CD8-positive, alpha-beta T cell (primary cell): ENCODE measurements at regions of chr12 and their contacts with region 1.

Region 1: GRCh38 chr12:49842519-49843352 is at the start of gene BCDIN3D:
- DNase-seq: peak; percentile 77 to 96 (median 92)
- ATAC-seq: peak; percentile 91
- H3K4me3 ChIP-seq: peak within 1 kb of the TSS; percentile 87 to 91
- H3K4me3 Mint-ChIP-seq: peak within 1 kb of the TSS; percentile 94
- H3K27ac ChIP-seq: peak within 1 kb of the TSS; percentile 71 to 77
- H3K27ac Mint-ChIP-seq: peak within 1 kb of the TSS; percentile 98
- H3K4me1 ChIP-seq: peaks cover 25% of the 10 kb centered on the region
- H3K4me1 Mint-ChIP-seq: peaks cover 33% of the 10 kb centered on the region
- H3K27me3 ChIP-seq: no peaks in the 10 kb centered on the region
- H3K27me3 Mint-ChIP-seq: no peaks in the 10 kb centered on the region
- CTCF ChIP-seq: no peak
- total RNA-seq, gene BCDIN3D: 4.2 to 5.9 TPM

Region 2: DNA sequence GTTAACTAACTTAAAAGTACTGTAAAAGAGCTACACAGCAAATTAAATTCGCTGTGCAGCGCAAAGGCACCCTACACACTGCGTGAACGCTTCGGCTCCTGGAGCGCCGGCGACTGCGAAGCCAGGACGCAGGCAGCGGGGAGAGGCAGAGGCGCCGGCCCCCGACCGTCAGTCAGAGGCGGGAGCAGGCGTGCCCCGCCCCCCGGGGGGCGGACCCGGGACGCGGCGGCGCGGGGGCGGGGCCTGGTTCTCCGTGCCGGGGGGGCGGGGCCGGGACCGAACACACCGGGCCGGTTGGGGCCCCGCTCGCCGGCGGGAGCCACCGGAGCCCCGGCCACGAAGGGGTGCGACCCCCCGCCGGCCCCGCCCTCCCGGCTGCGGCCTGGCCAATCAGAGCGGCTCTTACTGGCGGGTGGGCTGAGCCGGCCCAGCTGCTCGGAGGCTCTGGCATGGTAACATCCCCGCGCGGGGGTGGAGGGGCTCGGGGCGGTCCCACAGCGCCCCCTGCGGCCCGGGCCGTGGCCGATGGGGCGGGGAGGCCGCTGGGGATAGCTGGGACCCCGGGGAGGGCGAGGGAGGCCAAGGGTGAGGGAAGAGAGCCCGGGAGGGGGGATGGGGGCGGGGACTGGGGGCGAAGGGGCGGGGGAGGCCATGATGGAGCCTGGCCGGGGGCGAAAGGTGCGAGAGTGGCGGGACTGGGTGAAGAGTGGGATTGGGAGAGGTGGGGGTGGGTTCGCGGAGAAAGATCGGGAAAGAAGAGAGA is 219.4 kb before region 1 on chr12 and contains the start of gene PRPF40B:
- CTCF ChIA-PET with region 1: interaction called, 5 read pairs
- POLR2A ChIA-PET with region 1: no interaction called
- intact Hi-C with region 1: loop called (anchors 5 kb)
- DNase-seq: peak; percentile 68 to 92 (median 84)
- ATAC-seq: peak; percentile 78
- H3K4me3 ChIP-seq: peak within 1 kb of the TSS; percentile 56 to 82
- H3K4me3 Mint-ChIP-seq: peak within 1 kb of the TSS; percentile 88
- H3K27ac ChIP-seq: peak within 1 kb of the TSS; percentile 56 to 63
- H3K27ac Mint-ChIP-seq: peak within 1 kb of the TSS; percentile 91
- H3K4me1 ChIP-seq: peaks cover 34% of the 10 kb centered on the region
- H3K4me1 Mint-ChIP-seq: peaks cover 27% of the 10 kb centered on the region
- H3K27me3 ChIP-seq: no peaks in the 10 kb centered on the region
- H3K27me3 Mint-ChIP-seq: no peaks in the 10 kb centered on the region
- CTCF ChIP-seq: peak; percentile 46
- total RNA-seq, gene PRPF40B: 3.4 to 4.2 TPM

Region 3: GRCh38 chr12:49740930-49741881 is 101.5 kb before region 1 on chr12 and contains the start of gene TMBIM6:
- CTCF ChIA-PET with region 1: interaction called, 16 read pairs
- POLR2A ChIA-PET with region 1: interaction called, 15 read pairs
- intact Hi-C with region 1: loop called (anchors 1 kb)
- DNase-seq: peak; percentile 96 to 100 (median 98)
- ATAC-seq: peak; percentile 86
- H3K4me3 ChIP-seq: peak within 1 kb of the TSS; percentile 63 to 88
- H3K4me3 Mint-ChIP-seq: peak within 1 kb of the TSS; percentile 93
- H3K27ac ChIP-seq: peak within 1 kb of the TSS; percentile 96 to 99
- H3K27ac Mint-ChIP-seq: peak within 1 kb of the TSS; percentile 98
- H3K4me1 ChIP-seq: peaks cover 38% of the 10 kb centered on the region
- H3K4me1 Mint-ChIP-seq: peaks cover 41% of the 10 kb centered on the region
- H3K27me3 ChIP-seq: no peaks in the 10 kb centered on the region
- H3K27me3 Mint-ChIP-seq: no peaks in the 10 kb centered on the region
- CTCF ChIP-seq: peak; percentile 93
- total RNA-seq, gene TMBIM6: 289 to 309 TPM

Region 4: DNA sequence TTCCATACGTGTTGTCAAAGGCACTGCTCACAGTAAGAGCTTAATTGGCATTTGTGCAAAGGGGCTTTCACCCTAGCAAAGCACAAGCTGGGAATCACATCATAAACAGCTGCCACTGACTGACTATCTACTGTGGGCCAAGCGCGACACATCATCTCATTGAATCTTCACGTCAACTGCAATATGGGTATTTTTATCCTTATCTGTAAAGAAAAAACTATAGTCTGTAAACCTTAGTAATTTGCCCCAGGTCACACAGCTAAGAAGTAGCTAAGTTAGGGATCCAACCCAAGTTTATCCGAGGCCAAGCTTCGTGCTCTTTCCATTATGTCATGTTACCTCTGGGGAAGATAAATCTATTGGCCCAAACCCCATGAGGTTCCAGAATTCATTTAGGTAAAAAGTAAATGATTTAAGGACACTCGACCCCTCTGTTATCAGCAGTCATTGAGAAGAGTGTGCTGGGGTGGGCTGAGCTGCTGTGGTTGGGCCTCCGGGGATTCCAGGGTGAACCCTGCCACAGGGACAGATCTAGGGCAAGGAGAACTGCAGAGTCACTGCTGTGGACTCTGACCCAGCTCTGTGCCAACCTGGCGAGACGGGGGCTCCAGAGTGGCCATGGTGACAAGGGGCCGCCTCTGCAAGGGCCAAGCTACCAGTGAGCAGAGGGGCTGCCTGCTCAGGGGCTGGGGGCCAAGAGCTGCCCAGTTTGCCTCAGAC is 42.2 kb before region 1 on chr12:
- CTCF ChIA-PET with region 1: interaction called, 10 read pairs
- POLR2A ChIA-PET with region 1: no interaction called
- intact Hi-C with region 1: no loop called
- DNase-seq: no peak
- ATAC-seq: no peak
- H3K4me3 ChIP-seq: no peak overlapping the region
- H3K4me3 Mint-ChIP-seq: no peak overlapping the region
- H3K27ac ChIP-seq: no peak overlapping the region
- H3K27ac Mint-ChIP-seq: no peak overlapping the region
- H3K4me1 ChIP-seq: no peaks in the 10 kb centered on the region
- H3K4me1 Mint-ChIP-seq: no peaks in the 10 kb centered on the region
- H3K27me3 ChIP-seq: no peaks in the 10 kb centered on the region
- H3K27me3 Mint-ChIP-seq: no peaks in the 10 kb centered on the region
- CTCF ChIP-seq: no peak

Region 5: GRCh38 chr12:50025187-50026059 is 182.7 kb after region 1 on chr12 and contains the start of gene RACGAP1:
- CTCF ChIA-PET with region 1: no interaction called
- POLR2A ChIA-PET with region 1: no interaction called
- intact Hi-C with region 1: loop called in 1 of 2 experiments (anchors 5 kb)
- DNase-seq: peak; percentile 88 to 99 (median 94)
- ATAC-seq: peak; percentile 97
- H3K4me3 ChIP-seq: peak within 1 kb of the TSS; percentile 62 to 78
- H3K4me3 Mint-ChIP-seq: peak within 1 kb of the TSS; percentile 98
- H3K27ac ChIP-seq: peak within 1 kb of the TSS; percentile 38 to 63
- H3K27ac Mint-ChIP-seq: peak within 1 kb of the TSS; percentile 86
- H3K4me1 ChIP-seq: no peaks in the 10 kb centered on the region
- H3K4me1 Mint-ChIP-seq: peaks cover 16% of the 10 kb centered on the region
- H3K27me3 ChIP-seq: no peaks in the 10 kb centered on the region
- H3K27me3 Mint-ChIP-seq: no peaks in the 10 kb centered on the region
- CTCF ChIP-seq: no peak
- total RNA-seq, gene RACGAP1: 2.2 to 2.8 TPM